PC-3 (cell line): ENCODE measurements at regions of chr7 and their contacts with region 1.

Region 1: DNA sequence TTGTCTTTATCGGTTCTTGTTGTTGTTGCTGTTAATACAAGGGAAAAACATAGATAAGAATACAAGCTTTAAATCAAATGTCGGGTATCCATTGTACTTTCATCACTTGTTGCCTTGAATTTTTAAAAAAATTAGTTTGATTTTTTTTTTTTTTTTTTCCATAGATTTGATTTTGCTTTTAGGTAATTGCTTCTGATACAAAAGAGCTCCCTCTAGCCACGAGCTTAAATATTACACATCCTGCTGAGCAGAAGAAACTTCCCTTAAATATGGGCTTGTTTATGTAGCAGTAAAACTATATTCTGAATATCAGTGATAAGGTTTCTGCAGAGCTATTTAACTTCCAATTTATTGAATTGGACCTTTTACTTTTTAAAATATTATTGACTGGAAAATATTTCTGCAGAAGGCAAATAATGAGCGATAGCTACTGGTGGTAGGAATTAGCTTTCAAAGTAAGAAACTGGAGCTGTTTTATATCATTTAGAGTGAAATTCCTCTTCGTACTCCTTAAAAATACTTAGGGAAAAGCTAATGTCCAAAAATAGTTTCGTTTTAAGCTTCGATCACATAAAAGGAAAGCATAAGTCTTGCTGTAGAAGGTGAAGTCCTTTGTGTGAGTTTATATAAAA is 216.9 kb downstream of the POLR1F start:
- DNase-seq: peak; percentile 66
- ATAC-seq: 0 out of 2 replicates have a peak, but pooled peaks have one; percentile 35
- H3K4me3 ChIP-seq: no peak overlapping the region
- H3K27ac ChIP-seq: no peak overlapping the region
- H3K4me1 ChIP-seq: no peaks in the 10 kb centered on the region
- H3K27me3 ChIP-seq: 0 out of 2 replicates have a peak, but pooled peaks cover 4% of the 10 kb centered on the region
- CTCF ChIP-seq: peak; percentile 76

Region 2: DNA sequence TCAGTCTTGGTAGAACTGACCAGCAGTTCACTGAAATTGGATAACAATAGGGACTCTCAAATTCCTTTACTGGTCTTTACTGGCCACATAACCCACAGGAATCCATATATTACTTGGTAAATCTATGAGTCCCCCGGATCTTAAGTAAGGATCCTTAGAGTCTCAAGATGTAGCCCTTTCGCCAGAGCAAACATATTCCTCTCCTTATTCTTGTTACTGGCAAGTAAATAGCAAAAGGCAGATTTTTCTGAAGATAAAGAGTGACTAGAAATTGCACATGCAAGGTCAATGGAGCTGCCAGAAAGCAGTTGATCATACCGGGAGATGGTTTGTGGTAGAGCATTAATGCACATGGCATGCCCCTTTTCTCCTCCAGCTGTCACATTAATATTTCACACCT is 713.3 kb before region 1 on chr7:
- CTCF ChIA-PET with region 1: interaction called, 16 read pairs
- POLR2A ChIA-PET with region 1: no interaction called
- intact Hi-C with region 1: no loop called
- DNase-seq: peak; percentile 23
- ATAC-seq: no peak
- H3K4me3 ChIP-seq: no peak overlapping the region
- H3K27ac ChIP-seq: no peak overlapping the region
- H3K4me1 ChIP-seq: no peaks in the 10 kb centered on the region
- H3K27me3 ChIP-seq: no peaks in the 10 kb centered on the region
- CTCF ChIP-seq: no peak

Region 3: GRCh38 chr7:19327018-19327417 is 164.9 kb before region 1 on chr7:
- CTCF ChIA-PET with region 1: no interaction called
- POLR2A ChIA-PET with region 1: no interaction called
- intact Hi-C with region 1: no loop called
- DNase-seq: no peak
- ATAC-seq: no peak
- H3K4me3 ChIP-seq: no peak overlapping the region
- H3K27ac ChIP-seq: no peak overlapping the region
- H3K4me1 ChIP-seq: no peaks in the 10 kb centered on the region
- H3K27me3 ChIP-seq: 0 out of 2 replicates have a peak, but pooled peaks cover 2% of the 10 kb centered on the region
- CTCF ChIP-seq: no peak

Region 4: DNA sequence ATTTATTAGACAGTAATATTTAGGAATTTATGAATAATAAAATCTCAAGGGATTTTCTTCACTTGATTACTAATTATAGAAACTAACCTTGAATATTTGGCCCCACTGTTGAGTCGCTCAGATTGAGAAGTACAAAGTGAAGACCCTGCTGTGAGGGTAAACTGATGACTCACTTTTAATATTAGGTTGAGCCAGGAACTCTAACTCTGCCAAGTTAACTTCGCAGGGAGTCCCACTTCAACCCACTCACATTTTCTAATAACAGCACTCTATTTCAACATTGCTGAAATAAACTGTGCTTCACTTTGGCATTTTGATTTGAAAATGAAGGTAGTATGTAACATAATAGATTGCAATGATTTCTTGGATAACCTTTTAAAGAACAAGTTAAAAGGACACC is 16.2 kb after region 1 on chr7:
- CTCF ChIA-PET with region 1: interaction called, 11 read pairs
- POLR2A ChIA-PET with region 1: no interaction called
- intact Hi-C with region 1: no loop called
- DNase-seq: no peak
- ATAC-seq: no peak
- H3K4me3 ChIP-seq: no peak overlapping the region
- H3K27ac ChIP-seq: no peak overlapping the region
- H3K4me1 ChIP-seq: no peaks in the 10 kb centered on the region
- H3K27me3 ChIP-seq: no peaks in the 10 kb centered on the region
- CTCF ChIP-seq: no peak

Region 5: DNA sequence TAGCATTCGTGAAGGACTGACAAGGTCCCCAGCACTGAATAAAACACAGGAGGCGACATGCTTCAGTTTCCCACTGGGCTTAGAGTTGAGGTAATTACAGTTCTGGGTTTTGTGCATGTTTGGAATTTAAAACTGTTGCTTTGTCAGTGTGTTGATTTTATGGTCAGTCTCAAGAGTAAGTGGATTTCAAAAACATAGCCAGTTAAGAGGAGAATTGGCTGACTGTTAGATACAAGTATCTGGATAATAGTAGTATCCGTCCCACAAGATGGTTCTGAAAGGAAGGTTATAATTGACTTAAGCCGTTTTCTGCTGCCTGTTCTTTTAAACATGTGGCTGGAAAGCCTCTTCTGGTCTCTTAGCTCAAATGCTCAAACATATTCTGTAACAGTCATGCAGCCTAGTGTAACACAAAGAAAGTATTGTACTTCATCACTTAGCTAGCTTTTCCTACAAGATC is 46.0 kb after region 1 on chr7:
- CTCF ChIA-PET with region 1: interaction called, 12 read pairs
- POLR2A ChIA-PET with region 1: no interaction called
- intact Hi-C with region 1: no loop called
- DNase-seq: no peak
- ATAC-seq: 0 out of 2 replicates have a peak, but pooled peaks have one; percentile 38
- H3K4me3 ChIP-seq: no peak overlapping the region
- H3K27ac ChIP-seq: no peak overlapping the region
- H3K4me1 ChIP-seq: no peaks in the 10 kb centered on the region
- H3K27me3 ChIP-seq: no peaks in the 10 kb centered on the region
- CTCF ChIP-seq: no peak

Region 6: GRCh38 chr7:19665399-19666008 is 173.6 kb after region 1 on chr7:
- CTCF ChIA-PET with region 1: interaction called, 10 read pairs
- POLR2A ChIA-PET with region 1: no interaction called
- intact Hi-C with region 1: loop called (anchors 1 kb)
- DNase-seq: peak; percentile 50
- ATAC-seq: peak; percentile 51; the same call in 1 of the 2 replicates
- H3K4me3 ChIP-seq: no peak overlapping the region
- H3K27ac ChIP-seq: no peak overlapping the region
- H3K4me1 ChIP-seq: peaks cover 12% of the 10 kb centered on the region
- H3K27me3 ChIP-seq: peaks cover 7% of the 10 kb centered on the region; the same call in 1 of the 2 replicates
- CTCF ChIP-seq: peak; percentile 77

Region 7: GRCh38 chr7:19698331-19698730 is 206.4 kb after region 1 on chr7:
- CTCF ChIA-PET with region 1: no interaction called
- POLR2A ChIA-PET with region 1: no interaction called
- intact Hi-C with region 1: no loop called
- DNase-seq: no peak
- ATAC-seq: no peak
- H3K4me3 ChIP-seq: no peak overlapping the region
- H3K27ac ChIP-seq: no peak overlapping the region
- H3K4me1 ChIP-seq: no peaks in the 10 kb centered on the region
- H3K27me3 ChIP-seq: no peaks in the 10 kb centered on the region
- CTCF ChIP-seq: no peak

Region 8: GRCh38 chr7:20021831-20022230 is 529.9 kb after region 1 on chr7:
- CTCF ChIA-PET with region 1: no interaction called
- POLR2A ChIA-PET with region 1: no interaction called
- intact Hi-C with region 1: no loop called
- DNase-seq: no peak
- ATAC-seq: no peak; the same call in 1 of the 2 replicates
- H3K4me3 ChIP-seq: no peak overlapping the region
- H3K27ac ChIP-seq: no peak overlapping the region
- H3K4me1 ChIP-seq: 0 out of 2 replicates have a peak, but pooled peaks cover under 1% of the 10 kb centered on the region
- H3K27me3 ChIP-seq: no peaks in the 10 kb centered on the region
- CTCF ChIP-seq: no peak

Region 9: DNA sequence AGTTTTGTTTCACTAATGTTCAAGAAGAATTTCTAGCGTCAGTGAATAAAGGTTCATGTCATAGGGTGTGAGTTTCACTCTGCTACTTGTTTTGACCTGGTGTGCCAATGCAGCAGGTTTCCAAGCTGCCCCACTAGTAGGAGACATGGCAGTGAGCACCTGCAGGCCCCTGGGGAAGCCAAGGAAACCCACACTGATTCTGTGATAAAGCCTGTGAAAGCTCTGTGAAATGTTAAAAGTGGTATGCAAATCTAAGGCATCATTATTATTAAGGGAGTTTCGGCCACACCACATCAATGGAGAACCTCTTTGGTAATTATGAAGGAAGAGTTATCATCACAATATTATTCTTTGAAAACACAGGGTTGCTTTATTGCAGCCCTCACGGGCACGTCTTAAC is 1169.9 kb after region 1 on chr7:
- CTCF ChIA-PET with region 1: no interaction called
- POLR2A ChIA-PET with region 1: no interaction called
- intact Hi-C with region 1: no loop called
- DNase-seq: no peak
- ATAC-seq: no peak
- H3K4me3 ChIP-seq: no peak overlapping the region
- H3K27ac ChIP-seq: no peak overlapping the region
- H3K4me1 ChIP-seq: no peaks in the 10 kb centered on the region
- H3K27me3 ChIP-seq: peaks cover 20% of the 10 kb centered on the region; the same call in 1 of the 2 replicates
- CTCF ChIP-seq: no peak